A549 (cell line): ENCODE measurements at regions of chr9 and their contacts with region 1.

Region 1: GRCh38 chr9:37465249-37466036 is at the start of gene ZBTB5:
- DNase-seq: peak; percentile 99 to 100
- ATAC-seq: peak; percentile 79 to 86
- H3K4me3 ChIP-seq: peak within 1 kb of the TSS; percentile 55
- H3K27ac ChIP-seq: peak within 1 kb of the TSS; percentile 97 to 99
- H3K4me1 ChIP-seq: peaks cover 32% of the 10 kb centered on the region
- CTCF ChIP-seq: no peak
- EP300 ChIP-seq: no peak
- POLR2A ChIP-seq: peak; percentile 79
- RAD21 ChIP-seq: no peak
- polyA plus RNA-seq, gene ZBTB5: 18.1 and 19.8 TPM in 2 replicates

Region 2: DNA sequence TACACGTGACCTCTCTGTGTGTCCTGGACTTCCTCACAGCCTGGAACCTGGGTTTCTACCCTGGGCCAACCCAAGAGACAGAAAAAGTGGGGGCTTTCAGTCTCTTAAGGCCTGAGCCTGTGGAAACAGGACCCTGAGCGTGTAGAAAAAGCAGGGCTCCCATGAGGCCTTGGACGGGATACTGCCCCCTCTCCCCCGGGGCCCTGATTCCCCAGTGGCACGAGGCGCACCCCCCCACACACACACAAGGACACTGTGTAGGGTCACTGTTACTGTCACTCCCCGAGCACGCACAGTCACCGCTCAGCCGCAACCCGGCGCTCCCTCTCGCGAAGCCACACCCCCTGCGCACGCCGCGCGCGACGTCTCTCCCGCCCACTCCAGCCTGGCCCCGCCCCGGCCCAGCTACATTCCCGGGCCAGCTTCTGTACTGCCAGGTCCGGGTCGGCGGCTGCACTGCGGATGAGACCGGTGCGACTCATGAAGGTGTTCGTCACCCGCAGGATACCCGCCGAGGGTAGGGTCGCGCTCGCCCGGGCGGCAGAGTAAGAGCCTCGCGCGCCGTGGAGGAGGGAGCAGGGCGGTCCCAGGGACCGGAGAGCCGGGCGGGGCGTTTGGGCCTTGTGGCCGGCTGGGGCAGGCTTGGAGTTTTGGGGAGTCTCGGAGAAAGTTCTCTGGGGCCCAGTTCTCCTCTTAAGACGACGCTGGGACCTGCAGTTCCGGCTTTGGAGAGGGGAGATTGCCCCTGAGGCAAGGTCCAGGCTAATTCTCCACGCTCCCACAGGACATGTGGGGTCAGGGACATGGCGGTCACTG is 42.9 kb before region 1 on chr9 and contains the start of gene GRHPR:
- CTCF ChIA-PET with region 1: interaction called, 3 read pairs
- POLR2A ChIA-PET with region 1: interaction called, 28 read pairs
- DNase-seq: peak; percentile 82 to 84
- ATAC-seq: peak; percentile 97 to 98
- H3K4me3 ChIP-seq: peak within 1 kb of the TSS; percentile 85
- H3K27ac ChIP-seq: peak within 1 kb of the TSS; percentile 91 to 92
- H3K4me1 ChIP-seq: peaks cover 44% of the 10 kb centered on the region
- CTCF ChIP-seq: no peak
- EP300 ChIP-seq: no peak
- POLR2A ChIP-seq: peak; percentile 85
- RAD21 ChIP-seq: no peak
- polyA plus RNA-seq, gene GRHPR: 111 and 132 TPM in 2 replicates

Region 3: DNA sequence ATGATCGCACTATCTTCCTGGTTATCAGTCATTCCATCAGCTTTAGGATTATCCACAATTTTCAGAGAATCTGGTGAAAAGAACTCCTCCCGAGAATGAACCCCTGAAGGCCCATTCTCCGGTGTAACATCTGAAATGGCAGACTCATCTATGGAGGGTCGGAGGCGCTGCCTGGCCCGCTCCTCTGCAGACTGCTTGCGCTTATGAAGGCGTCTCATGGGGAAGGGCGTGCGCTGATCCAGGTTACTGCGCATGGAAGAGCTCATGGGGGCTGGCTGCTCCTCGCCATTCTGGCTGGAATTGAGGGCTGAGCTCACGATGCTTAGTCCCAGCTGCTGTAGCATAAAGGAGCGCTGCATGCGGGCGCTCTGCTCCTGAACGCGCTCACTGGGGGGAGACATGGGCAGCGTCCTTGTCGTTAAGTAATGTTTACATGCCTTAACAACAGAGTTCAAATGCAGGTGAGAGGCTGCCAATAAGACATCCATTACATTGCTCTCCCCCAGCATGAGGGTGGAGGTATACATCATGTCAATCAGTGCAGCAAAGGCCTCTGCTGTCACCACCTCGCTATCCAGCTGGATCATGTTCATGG is 23.6 kb before region 1 on chr9:
- CTCF ChIA-PET with region 1: no interaction called
- POLR2A ChIA-PET with region 1: interaction called, 12 read pairs
- DNase-seq: no peak
- ATAC-seq: no peak
- H3K4me3 ChIP-seq: no peak overlapping the region
- H3K27ac ChIP-seq: no peak overlapping the region
- H3K4me1 ChIP-seq: peaks cover 16% of the 10 kb centered on the region
- CTCF ChIP-seq: no peak
- EP300 ChIP-seq: no peak
- POLR2A ChIP-seq: no peak
- RAD21 ChIP-seq: no peak

Region 4: GRCh38 chr9:37485389-37486219 is 20.2 kb after region 1 on chr9 and contains the start of gene POLR1E:
- CTCF ChIA-PET with region 1: interaction called, 3 read pairs
- POLR2A ChIA-PET with region 1: interaction called, 13 read pairs
- DNase-seq: peak; percentile 94 to 99
- ATAC-seq: peak; percentile 93 to 95
- H3K4me3 ChIP-seq: peak within 1 kb of the TSS; percentile 88
- H3K27ac ChIP-seq: peak within 1 kb of the TSS; percentile 88 to 92
- H3K4me1 ChIP-seq: peaks cover 24% of the 10 kb centered on the region
- CTCF ChIP-seq: no peak
- EP300 ChIP-seq: no peak
- POLR2A ChIP-seq: peak; percentile 87
- RAD21 ChIP-seq: no peak
- polyA plus RNA-seq, gene POLR1E: 47.2 and 49.8 TPM in 2 replicates